ENCODE measurements at regions of chr2 and their contacts with region 1.

Region 1: DNA sequence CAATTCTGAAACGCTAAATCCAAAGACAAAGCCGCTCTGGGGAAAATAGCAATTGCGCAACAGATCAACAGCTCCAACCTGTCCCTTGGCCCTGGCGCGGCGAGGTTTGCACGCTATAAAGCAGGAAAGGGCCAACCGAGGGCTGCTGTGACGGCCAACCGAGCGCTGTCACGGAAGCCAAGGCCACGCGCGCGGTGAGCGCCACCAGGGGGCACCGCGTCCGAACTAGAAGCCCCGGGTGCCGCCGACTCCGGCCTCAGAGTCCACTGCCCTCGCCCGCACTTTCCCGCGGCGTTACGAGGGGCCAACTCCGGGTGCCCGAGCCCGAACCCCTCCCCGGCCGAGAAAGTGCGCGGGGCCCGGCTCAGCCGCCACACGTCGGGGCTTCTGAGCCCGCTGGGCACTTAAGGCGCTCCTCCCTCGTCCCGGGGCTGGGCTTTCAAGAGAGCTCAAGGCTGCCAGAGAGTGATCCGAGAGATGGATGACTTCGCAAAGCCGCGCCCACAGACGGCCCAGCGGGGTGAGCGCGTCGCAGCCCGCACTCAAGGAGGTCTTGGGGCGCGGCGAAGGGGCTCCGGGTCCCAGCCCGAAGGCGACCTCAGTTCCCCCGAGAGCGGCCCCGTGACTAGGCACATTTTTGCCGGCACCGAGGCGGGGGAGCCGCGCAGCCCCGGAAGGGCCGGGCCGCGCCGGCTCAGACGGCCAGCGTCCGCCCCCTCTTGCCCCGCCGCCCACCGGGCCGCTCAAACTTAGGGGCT is 897 bp downstream of the NFE2L2 start:
- DNase-seq: peak; percentile 75 to 99 (median 82)
- ATAC-seq: peak; percentile 69
- H3K4me3 ChIP-seq: peak overlapping the region; percentile 91
- H3K27ac ChIP-seq: peak overlapping the region; percentile 98
- H3K4me1 ChIP-seq: peaks cover 32 to 38% of the 10 kb centered on the region in 2 experiments
- H3K27me3 ChIP-seq: no peaks in the 10 kb centered on the region
- CTCF ChIP-seq: peak; percentile 86 to 94 (median 91)
- EP300 ChIP-seq: peak; percentile 83
- POLR2A ChIP-seq: peak; percentile 85
- RAD21 ChIP-seq: peak; percentile 85 to 95

Region 2: GRCh38 chr2:177164584-177165052 is 99.0 kb before region 1 on chr2:
- CTCF ChIA-PET with region 1: interaction called, 3 read pairs
- POLR2A ChIA-PET with region 1: interaction called, 25 read pairs
- in situ Hi-C with region 1: loop called (anchors 5 kb)
- intact Hi-C with region 1: loop called (anchors 1 kb)
- DNase-seq: peak; percentile 80 to 92 (median 82)
- ATAC-seq: peak; percentile 64
- H3K4me3 ChIP-seq: no peak overlapping the region
- H3K27ac ChIP-seq: peak overlapping the region; percentile 71; the same call in 2 of the 3 replicates
- H3K4me1 ChIP-seq: peaks cover 15 to 40% of the 10 kb centered on the region in 2 experiments
- H3K27me3 ChIP-seq: no peaks in the 10 kb centered on the region
- CTCF ChIP-seq: peak; percentile 97 to 100 (median 99)
- EP300 ChIP-seq: peak; percentile 78
- POLR2A ChIP-seq: no peak
- RAD21 ChIP-seq: peak; percentile 100

Region 3: GRCh38 chr2:177229448-177230242 is 34.0 kb before region 1 on chr2:
- CTCF ChIA-PET with region 1: no interaction called
- POLR2A ChIA-PET with region 1: interaction called, 50 read pairs
- in situ Hi-C with region 1: no loop called
- intact Hi-C with region 1: no loop called
- DNase-seq: no peak
- ATAC-seq: peak; percentile 32
- H3K4me3 ChIP-seq: no peak overlapping the region
- H3K27ac ChIP-seq: no peak overlapping the region
- H3K4me1 ChIP-seq: peaks cover 0 to 2% of the 10 kb centered on the region in 2 experiments; a peak in 2 of 5 replicates
- H3K27me3 ChIP-seq: no peaks in the 10 kb centered on the region
- CTCF ChIP-seq: no peak
- EP300 ChIP-seq: no peak
- POLR2A ChIP-seq: peak; percentile 60
- RAD21 ChIP-seq: no peak

Region 4: DNA sequence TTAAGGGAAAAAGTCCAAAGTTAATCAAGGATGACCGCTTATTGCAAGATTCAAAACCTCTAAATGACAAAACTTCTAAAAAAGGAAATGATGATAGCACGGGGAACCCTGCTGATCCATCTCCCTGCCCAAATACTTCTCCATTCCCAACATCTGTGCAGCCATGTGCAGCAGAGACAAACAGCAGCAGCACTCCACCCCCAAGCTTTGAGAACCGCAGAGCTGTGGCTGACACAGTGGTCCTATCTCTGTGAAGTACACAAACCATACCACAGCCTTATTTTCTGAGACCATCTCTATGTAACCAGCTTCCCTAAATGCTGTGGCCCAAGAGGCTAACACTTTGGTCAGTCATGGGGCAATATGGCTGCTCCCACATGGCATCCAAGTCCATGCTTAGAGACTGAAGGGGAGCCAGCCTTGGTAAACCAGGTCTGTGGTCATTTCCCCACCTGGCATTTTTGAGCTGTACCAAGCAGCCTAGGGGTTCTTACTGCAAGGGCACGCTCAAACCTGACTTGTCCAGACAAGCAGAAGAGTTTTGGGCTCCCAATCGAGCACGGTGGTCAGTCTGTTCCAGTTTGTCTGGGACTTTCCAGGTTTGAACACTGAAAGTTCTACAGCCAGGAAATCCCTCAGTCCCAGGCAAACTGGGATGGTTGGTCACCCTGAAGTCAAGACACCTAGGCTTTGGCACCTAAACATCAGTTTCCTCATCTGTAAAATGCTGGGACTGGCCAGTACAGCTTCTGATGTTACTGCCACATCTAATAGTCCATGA is 18.0 kb after region 1 on chr2:
- CTCF ChIA-PET with region 1: no interaction called
- POLR2A ChIA-PET with region 1: interaction called, 199 read pairs
- in situ Hi-C with region 1: no loop called
- intact Hi-C with region 1: no loop called
- DNase-seq: peak in 1 of 4 experiments; percentile 44
- ATAC-seq: peak; percentile 56
- H3K4me3 ChIP-seq: no peak overlapping the region
- H3K27ac ChIP-seq: no peak overlapping the region; the same call in 2 of the 3 replicates
- H3K4me1 ChIP-seq: peaks cover 4 to 24% of the 10 kb centered on the region in 2 experiments; a peak in 3 of 5 replicates
- H3K27me3 ChIP-seq: no peaks in the 10 kb centered on the region
- CTCF ChIP-seq: no peak
- EP300 ChIP-seq: no peak
- POLR2A ChIP-seq: no peak
- RAD21 ChIP-seq: no peak

Region 5: DNA sequence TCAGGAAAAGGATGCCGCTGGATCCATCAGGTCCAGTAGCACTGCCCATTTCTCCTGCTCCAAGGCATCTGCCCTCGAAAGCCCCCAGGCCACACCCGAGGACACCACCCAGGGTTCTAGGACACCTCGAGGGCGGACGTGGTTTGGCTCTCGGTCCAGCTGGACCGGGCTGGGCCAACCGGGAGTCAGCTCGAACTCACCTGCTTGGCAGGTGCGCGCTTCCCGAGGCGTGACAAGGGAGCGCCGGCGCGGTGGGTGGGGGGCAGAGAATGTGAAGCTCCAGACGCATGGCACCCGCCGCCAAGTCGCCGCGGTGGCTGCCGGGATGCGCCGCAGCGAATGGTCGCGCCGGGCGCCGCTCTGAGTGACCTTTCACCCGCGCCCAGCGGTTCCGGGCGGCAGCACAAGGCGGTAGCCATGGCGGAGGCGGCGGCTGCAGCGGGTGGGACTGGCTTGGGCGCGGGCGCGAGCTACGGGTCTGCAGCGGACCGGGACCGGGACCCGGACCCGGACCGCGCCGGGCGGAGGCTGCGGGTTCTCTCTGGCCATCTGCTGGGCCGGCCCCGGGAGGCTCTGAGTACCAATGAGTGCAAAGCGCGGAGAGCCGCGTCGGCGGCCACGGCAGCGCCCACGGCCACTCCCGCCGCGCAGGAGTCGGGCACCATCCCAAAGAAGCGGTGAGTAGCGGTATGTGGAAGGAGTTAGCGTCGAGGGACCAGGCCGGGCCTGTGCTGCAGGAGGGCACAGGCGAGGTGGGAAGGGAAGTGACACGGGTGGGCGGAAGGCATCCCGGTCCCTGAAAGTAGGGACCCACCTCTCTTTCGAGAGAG is 129.0 kb after region 1 on chr2 and contains the start of gene AGPS:
- CTCF ChIA-PET with region 1: no interaction called
- POLR2A ChIA-PET with region 1: interaction called, 8 read pairs
- in situ Hi-C with region 1: no loop called
- intact Hi-C with region 1: loop called (anchors 5 kb)
- DNase-seq: peak; percentile 83 to 94 (median 88)
- ATAC-seq: peak; percentile 94
- H3K4me3 ChIP-seq: peak within 1 kb of the TSS; percentile 90
- H3K27ac ChIP-seq: peak within 1 kb of the TSS; percentile 91
- H3K4me1 ChIP-seq: peaks cover 9 to 44% of the 10 kb centered on the region in 2 experiments
- H3K27me3 ChIP-seq: no peaks in the 10 kb centered on the region
- CTCF ChIP-seq: no peak
- EP300 ChIP-seq: no peak
- POLR2A ChIP-seq: peak; percentile 95
- RAD21 ChIP-seq: 0 out of 4 replicates have a peak, but pooled peaks of 1 of the 2 experiments have one; percentile 3
- polyA plus RNA-seq, gene AGPS: 15.5 to 15.6 TPM

Region 6: DNA sequence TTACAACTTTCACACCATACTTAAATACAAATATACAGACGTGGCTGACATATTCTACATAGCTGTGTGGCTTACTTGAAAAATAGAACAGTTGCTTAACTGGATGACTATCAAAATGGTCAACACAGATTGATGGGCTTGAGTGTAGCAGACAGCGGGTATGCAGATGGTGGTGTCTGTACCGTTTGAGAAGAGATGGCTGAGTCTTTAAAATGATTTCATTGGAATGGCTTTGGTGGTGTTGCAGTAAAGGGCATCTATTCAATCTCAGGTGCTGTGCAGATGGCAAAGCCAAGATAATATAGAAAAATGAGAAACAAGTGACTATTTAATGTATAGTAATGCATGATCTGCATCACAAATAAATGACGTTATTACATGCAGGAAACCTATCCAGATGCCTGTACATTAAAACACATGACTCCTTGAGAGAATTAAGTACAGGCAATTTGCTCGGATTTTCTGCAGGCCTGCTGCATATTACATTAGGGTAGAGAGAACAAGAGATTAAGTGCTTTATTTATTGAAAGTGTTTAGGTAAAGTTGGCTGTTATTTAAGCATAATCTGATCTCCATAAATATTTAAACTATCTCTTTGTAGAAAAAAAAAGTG is 197.4 kb after region 1 on chr2:
- CTCF ChIA-PET with region 1: no interaction called
- POLR2A ChIA-PET with region 1: no interaction called
- in situ Hi-C with region 1: no loop called
- intact Hi-C with region 1: no loop called
- DNase-seq: no peak
- ATAC-seq: no peak
- H3K4me3 ChIP-seq: no peak overlapping the region
- H3K27ac ChIP-seq: no peak overlapping the region
- H3K4me1 ChIP-seq: no peaks in the 10 kb centered on the region
- H3K27me3 ChIP-seq: no peaks in the 10 kb centered on the region
- CTCF ChIP-seq: no peak
- EP300 ChIP-seq: no peak
- POLR2A ChIP-seq: no peak
- RAD21 ChIP-seq: no peak

Region 7: DNA sequence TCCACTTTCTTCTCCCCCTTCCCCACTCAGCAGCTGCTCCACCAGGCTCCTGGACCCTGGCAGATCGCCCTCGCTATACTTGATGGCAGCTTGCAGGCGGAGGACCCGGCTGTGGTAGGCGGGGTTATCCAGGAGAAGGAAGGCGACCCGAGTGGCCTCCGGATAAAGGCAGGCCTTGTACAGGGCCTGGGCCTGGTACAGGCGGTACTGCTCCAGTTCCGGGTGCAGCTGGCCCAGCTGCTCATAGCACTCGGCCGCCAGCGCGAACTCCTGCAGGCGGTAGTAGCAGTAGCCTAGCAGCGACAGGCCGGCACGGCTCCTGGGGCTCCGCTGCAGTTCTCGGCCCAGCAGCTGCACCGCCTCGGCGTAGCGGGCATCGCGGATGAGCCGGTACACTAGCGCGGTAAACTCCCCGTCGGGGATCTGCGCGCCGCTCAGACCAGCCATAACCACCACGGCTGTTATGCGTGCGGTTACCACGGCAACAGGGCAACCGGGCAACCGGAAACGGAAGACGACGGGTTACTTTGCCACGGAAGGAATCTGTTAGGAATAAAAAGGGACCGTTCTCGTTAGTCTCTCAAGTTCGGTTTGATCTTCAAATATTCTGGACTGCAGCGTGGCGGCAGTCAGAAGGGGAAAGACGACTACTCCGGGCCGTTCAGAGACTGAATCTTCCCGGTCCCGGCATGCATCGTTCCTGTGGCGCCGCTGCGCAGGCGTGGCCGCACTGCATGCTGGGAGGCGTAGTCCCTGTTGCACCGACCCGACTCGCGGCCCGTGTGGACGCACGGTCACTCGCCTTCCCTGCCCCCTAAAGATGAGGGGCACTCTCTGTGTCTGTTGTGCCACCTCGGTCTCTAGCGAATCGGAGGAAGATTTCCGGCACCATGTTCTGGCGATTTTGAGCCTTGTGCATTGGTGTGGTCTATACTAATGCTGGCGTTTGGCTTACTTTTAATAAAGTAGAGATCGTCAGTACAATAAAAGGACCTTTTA is 354.9 kb after region 1 on chr2:
- CTCF ChIA-PET with region 1: no interaction called
- POLR2A ChIA-PET with region 1: no interaction called
- in situ Hi-C with region 1: no loop called
- intact Hi-C with region 1: loop called (anchors 10 kb)
- DNase-seq: peak; percentile 93 to 94 (median 94)
- ATAC-seq: peak; percentile 97
- H3K4me3 ChIP-seq: peak overlapping the region; percentile 52
- H3K27ac ChIP-seq: peak overlapping the region; percentile 93
- H3K4me1 ChIP-seq: peaks cover 11 to 17% of the 10 kb centered on the region in 2 experiments; a peak in 4 of 5 replicates
- H3K27me3 ChIP-seq: no peaks in the 10 kb centered on the region
- CTCF ChIP-seq: no peak
- EP300 ChIP-seq: peak; percentile 13; the same call in 1 of the 2 replicates
- POLR2A ChIP-seq: peak; percentile 87
- RAD21 ChIP-seq: no peak; a peak in 1 of 4 replicates

Measured in K562 (cell line).